ENCODE measurements at regions of chr19 and their contacts with region 1.

Region 1: GRCh38 chr19:5048091-5048726 is 79.3 kb downstream of the KDM4B start:
- DNase-seq: peak; percentile 69
- H3K4me3 ChIP-seq: no peak overlapping the region
- H3K27ac ChIP-seq: no peak overlapping the region
- H3K4me1 ChIP-seq: peaks cover 7% of the 10 kb centered on the region
- H3K27me3 ChIP-seq: no peaks in the 10 kb centered on the region
- CTCF ChIP-seq: peak; percentile 97 to 99
- POLR2A ChIP-seq: no peak

Region 2: DNA sequence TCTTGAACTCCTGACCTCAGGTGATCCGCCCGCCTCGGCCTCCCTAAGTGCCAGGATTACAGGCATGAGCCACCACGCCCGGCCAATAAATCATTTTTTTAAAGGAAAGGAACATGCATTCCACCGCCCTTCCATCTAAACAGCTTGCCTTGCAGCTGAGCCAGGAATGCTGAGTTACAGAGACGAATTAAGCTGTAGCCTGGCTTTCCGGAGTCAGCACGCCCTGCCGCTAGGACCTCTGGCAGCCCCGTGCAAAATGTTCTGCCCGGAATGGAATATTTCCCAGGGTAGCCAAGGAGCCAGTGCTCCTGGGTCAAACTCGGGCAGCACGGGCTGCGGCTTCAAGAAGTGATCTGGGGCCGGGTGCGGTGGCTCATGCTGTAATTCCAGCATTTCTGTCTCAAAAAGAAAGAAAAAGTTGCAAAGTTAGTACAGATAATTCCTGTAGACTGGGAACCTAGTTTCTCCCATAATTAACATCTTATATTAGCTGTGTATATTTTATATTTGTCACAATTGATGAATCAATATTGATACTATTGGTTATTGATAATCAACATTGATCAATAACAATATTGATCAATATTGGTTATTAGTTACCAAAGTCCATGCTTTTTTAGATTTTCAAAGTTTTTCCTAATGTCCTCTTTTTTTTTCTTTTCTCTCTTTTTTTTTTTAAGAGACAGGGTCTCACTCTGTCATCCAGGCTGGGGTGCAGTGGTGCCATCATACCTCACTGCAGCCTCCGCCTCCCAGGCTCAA is 1148.5 kb before region 1 on chr19:
- CTCF ChIA-PET with region 1: no interaction called
- POLR2A ChIA-PET with region 1: no interaction called
- dilution Hi-C with region 1: no loop called
- intact Hi-C with region 1: no loop called
- DNase-seq: no peak
- H3K4me3 ChIP-seq: no peak overlapping the region
- H3K27ac ChIP-seq: no peak overlapping the region
- H3K4me1 ChIP-seq: no peaks in the 10 kb centered on the region
- H3K27me3 ChIP-seq: peaks cover 0 to 1% of the 10 kb centered on the region in 2 experiments
- CTCF ChIP-seq: no peak
- POLR2A ChIP-seq: no peak

Region 3: GRCh38 chr19:5128251-5128935 is 80.2 kb after region 1 on chr19:
- CTCF ChIA-PET with region 1: interaction called, 4 read pairs
- POLR2A ChIA-PET with region 1: interaction called, 11 read pairs
- dilution Hi-C with region 1: no loop called
- intact Hi-C with region 1: no loop called
- DNase-seq: peak; percentile 82
- H3K4me3 ChIP-seq: no peak overlapping the region
- H3K27ac ChIP-seq: no peak overlapping the region
- H3K4me1 ChIP-seq: no peaks in the 10 kb centered on the region
- H3K27me3 ChIP-seq: no peaks in the 10 kb centered on the region
- CTCF ChIP-seq: no peak
- POLR2A ChIP-seq: no peak

Region 4: DNA sequence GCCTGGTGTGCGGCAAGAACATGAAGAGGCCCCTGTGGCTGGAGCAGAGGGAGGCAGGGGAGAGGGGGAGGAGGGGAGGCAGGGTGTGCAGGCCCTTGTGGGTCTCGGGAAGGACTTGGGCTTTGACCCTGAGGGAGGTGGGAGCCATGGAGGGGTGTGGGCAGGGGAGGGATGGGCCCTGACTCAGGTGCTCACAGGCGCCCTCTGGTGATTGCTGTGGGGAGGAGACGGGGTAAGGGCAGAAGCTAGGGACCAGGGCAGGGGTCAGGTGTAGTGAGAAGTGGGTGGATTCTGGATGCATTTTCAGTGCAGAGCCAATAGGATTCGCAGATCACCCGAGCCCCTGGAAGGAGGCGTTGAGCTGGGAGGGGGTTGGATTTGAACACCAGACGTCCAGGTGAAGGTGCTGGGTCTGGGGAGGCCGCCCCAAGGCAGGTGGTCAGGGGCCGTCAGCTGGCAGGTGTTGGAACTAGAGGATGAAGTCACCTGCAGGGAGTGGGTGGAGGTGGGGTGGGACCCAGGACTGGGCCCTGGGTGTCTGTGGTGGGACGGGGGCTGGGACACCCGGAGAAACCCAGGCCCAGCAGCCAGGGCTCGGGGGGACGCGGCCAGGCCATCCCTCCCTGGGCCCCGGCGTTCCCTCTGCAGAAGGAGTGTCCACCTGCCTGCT is 106.1 kb after region 1 on chr19:
- CTCF ChIA-PET with region 1: interaction called, 10 read pairs
- POLR2A ChIA-PET with region 1: no interaction called
- dilution Hi-C with region 1: no loop called
- intact Hi-C with region 1: loop called (anchors 1 kb)
- DNase-seq: no peak
- H3K4me3 ChIP-seq: no peak overlapping the region
- H3K27ac ChIP-seq: no peak overlapping the region
- H3K4me1 ChIP-seq: no peaks in the 10 kb centered on the region
- H3K27me3 ChIP-seq: peaks cover 0 to 1% of the 10 kb centered on the region in 2 experiments
- CTCF ChIP-seq: peak; percentile 15 to 72
- POLR2A ChIP-seq: no peak

Region 5: DNA sequence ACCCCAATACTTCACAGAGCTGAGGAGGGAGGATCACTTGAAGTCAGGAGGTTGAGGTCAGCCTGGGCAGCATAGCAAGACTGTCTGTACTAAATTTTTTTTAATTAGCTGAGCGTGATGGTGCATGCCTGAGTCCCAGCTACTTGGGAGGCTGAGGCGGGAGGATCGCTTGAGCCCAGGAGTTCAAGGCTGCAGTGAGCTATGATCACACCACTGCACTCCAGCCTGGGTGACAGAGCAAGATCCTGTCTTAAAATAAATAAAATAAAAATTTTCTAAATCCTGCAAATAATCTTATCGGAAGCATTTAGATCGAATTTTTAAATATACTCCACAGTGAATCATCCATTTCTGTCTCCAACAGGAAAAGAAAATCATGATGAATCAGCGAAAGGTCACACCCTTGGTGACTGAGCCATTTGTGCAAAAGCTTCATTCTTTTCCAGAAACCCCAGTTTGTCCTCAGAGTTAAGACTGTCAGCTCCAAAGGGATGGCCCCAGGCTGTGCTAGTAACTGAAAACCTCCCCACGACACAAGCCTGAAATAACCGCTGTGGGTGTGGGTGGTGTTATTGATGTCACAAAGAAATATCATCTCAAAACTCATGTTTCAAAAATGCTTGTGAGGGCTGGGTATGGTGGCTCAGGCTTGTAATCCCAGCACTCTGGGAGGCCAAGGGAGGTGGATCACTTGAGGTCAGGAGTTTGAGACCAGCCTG is 124.8 kb after region 1 on chr19:
- CTCF ChIA-PET with region 1: no interaction called
- POLR2A ChIA-PET with region 1: no interaction called
- dilution Hi-C with region 1: no loop called
- intact Hi-C with region 1: no loop called
- DNase-seq: peak; percentile 76
- H3K4me3 ChIP-seq: no peak overlapping the region
- H3K27ac ChIP-seq: peak overlapping the region; percentile 13
- H3K4me1 ChIP-seq: peaks cover 8% of the 10 kb centered on the region
- H3K27me3 ChIP-seq: peaks cover 6 to 7% of the 10 kb centered on the region in 2 experiments
- CTCF ChIP-seq: no peak
- POLR2A ChIP-seq: no peak

Region 6: GRCh38 chr19:5354403-5354802 is 306.2 kb after region 1 on chr19:
- CTCF ChIA-PET with region 1: interaction called, 3 read pairs
- POLR2A ChIA-PET with region 1: no interaction called
- dilution Hi-C with region 1: no loop called
- intact Hi-C with region 1: loop called (anchors 5 kb)
- DNase-seq: no peak
- H3K4me3 ChIP-seq: no peak overlapping the region
- H3K27ac ChIP-seq: no peak overlapping the region
- H3K4me1 ChIP-seq: no peaks in the 10 kb centered on the region
- H3K27me3 ChIP-seq: no peaks in the 10 kb centered on the region
- CTCF ChIP-seq: peak; percentile 19 to 33
- POLR2A ChIP-seq: no peak

Region 7: DNA sequence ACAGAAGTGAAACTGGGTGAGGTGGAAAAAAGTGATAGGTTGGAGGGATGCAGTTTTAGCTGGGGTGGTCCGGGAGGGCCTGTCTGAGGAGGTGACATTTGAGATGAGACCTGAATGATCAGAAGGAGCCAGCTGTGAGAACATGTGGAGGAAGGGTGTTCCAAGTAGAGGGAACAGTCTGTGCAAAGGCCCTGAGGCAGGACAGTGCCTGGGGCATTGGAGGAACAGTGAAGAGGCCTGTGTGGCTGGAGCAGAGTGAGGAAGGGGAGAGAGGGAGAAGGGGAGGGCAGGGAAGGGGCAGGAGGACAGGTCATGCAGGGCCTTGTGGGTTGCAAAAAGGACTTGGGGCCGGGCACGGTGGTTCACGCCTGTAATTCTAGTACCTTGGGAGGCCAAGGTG is 328.7 kb after region 1 on chr19:
- CTCF ChIA-PET with region 1: interaction called, 15 read pairs
- POLR2A ChIA-PET with region 1: no interaction called
- dilution Hi-C with region 1: no loop called
- intact Hi-C with region 1: no loop called
- DNase-seq: no peak
- H3K4me3 ChIP-seq: no peak overlapping the region
- H3K27ac ChIP-seq: no peak overlapping the region
- H3K4me1 ChIP-seq: no peaks in the 10 kb centered on the region
- H3K27me3 ChIP-seq: no peaks in the 10 kb centered on the region
- CTCF ChIP-seq: no peak
- POLR2A ChIP-seq: no peak

Region 8: GRCh38 chr19:5480427-5480836 is 432.2 kb after region 1 on chr19:
- CTCF ChIA-PET with region 1: interaction called, 12 read pairs
- POLR2A ChIA-PET with region 1: no interaction called
- dilution Hi-C with region 1: no loop called
- intact Hi-C with region 1: no loop called
- DNase-seq: peak; percentile 12
- H3K4me3 ChIP-seq: no peak overlapping the region
- H3K27ac ChIP-seq: no peak overlapping the region
- H3K4me1 ChIP-seq: no peaks in the 10 kb centered on the region
- H3K27me3 ChIP-seq: peaks cover 2 to 5% of the 10 kb centered on the region in 2 experiments
- CTCF ChIP-seq: peak; percentile 46 to 65
- POLR2A ChIP-seq: no peak

Region 9: GRCh38 chr19:5577785-5578493 is 529.7 kb after region 1 on chr19:
- CTCF ChIA-PET with region 1: interaction called, 17 read pairs
- POLR2A ChIA-PET with region 1: no interaction called
- dilution Hi-C with region 1: no loop called
- intact Hi-C with region 1: loop called (anchors 1 kb)
- DNase-seq: peak; percentile 38
- H3K4me3 ChIP-seq: no peak overlapping the region
- H3K27ac ChIP-seq: no peak overlapping the region
- H3K4me1 ChIP-seq: no peaks in the 10 kb centered on the region
- H3K27me3 ChIP-seq: no peaks in the 10 kb centered on the region
- CTCF ChIP-seq: peak; percentile 94 to 99
- POLR2A ChIP-seq: no peak

Measured in endothelial cell of umbilical vein (primary cell).